ENCODE measurements at regions of chr6 and their contacts with region 1.

Region 1: GRCh38 chr6:24991810-24992467 is 56.2 kb upstream of the RIPOR2 start:
- DNase-seq: peak; percentile 53 to 85 (median 70)
- H3K4me3 ChIP-seq: peak overlapping the region; percentile 30
- H3K4me3 Mint-ChIP-seq: peak overlapping the region in 6 of 7 donors; percentile 33 to 79 (median 57)
- H3K27ac ChIP-seq: peak overlapping the region; percentile 6
- H3K27ac Mint-ChIP-seq: peak overlapping the region; percentile 77 to 95 (median 86)
- H3K4me1 ChIP-seq: peaks cover 43% of the 10 kb centered on the region
- H3K4me1 Mint-ChIP-seq: peaks cover 63 to 86% (median 83%) of the 10 kb centered on the region in 3 donors
- H3K27me3 ChIP-seq: no peaks in the 10 kb centered on the region
- H3K27me3 Mint-ChIP-seq: no peaks in the 10 kb centered on the region

Region 2: DNA sequence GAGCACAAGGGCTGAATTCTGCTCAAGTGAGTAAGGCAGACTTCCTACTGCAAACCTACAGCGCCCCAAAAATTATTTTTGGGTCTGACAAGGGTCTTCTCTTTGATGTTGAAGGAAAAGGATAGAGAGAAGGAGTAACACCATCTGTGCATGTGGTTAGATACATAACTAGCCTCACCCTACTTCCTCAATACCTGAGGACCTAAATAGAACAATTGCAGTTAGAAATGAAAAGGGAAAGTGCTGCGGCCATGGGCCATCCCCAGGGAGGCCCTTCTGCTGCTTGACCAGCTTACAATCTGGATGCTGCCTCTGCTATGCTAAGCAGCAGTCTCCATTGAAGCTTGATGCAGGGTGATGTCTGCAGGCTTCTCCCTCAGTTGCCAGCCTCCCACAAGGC is 130.0 kb before region 1 on chr6:
- CTCF ChIA-PET with region 1: interaction called, 80 read pairs
- POLR2A ChIA-PET with region 1: interaction called, 7 read pairs
- DNase-seq: no peak
- H3K4me3 ChIP-seq: no peak overlapping the region
- H3K4me3 Mint-ChIP-seq: peak overlapping the region in 3 of 7 donors; percentile 4 to 59 (median 13)
- H3K27ac ChIP-seq: no peak overlapping the region
- H3K27ac Mint-ChIP-seq: peak overlapping the region; percentile 75 to 93 (median 82)
- H3K4me1 ChIP-seq: peaks cover 95% of the 10 kb centered on the region
- H3K4me1 Mint-ChIP-seq: peaks cover 87 to 98% (median 90%) of the 10 kb centered on the region in 3 donors
- H3K27me3 ChIP-seq: no peaks in the 10 kb centered on the region
- H3K27me3 Mint-ChIP-seq: peaks cover 0 to 2% of the 10 kb centered on the region in 2 donors

Region 3: GRCh38 chr6:24902782-24903181 is 89.2 kb before region 1 on chr6:
- CTCF ChIA-PET with region 1: interaction called, 87 read pairs
- POLR2A ChIA-PET with region 1: no interaction called
- DNase-seq: no peak
- H3K4me3 ChIP-seq: no peak overlapping the region
- H3K4me3 Mint-ChIP-seq: peak overlapping the region in 6 of 7 donors; percentile 10 to 79 (median 52)
- H3K27ac ChIP-seq: no peak overlapping the region
- H3K27ac Mint-ChIP-seq: peak overlapping the region; percentile 60 to 98 (median 89)
- H3K4me1 ChIP-seq: peaks cover 96% of the 10 kb centered on the region
- H3K4me1 Mint-ChIP-seq: peaks cover 93 to 100% (median 98%) of the 10 kb centered on the region in 3 donors
- H3K27me3 ChIP-seq: no peaks in the 10 kb centered on the region
- H3K27me3 Mint-ChIP-seq: no peaks in the 10 kb centered on the region

Region 4: GRCh38 chr6:24924580-24925356 is 67.2 kb before region 1 on chr6:
- CTCF ChIA-PET with region 1: interaction called, 33 read pairs
- POLR2A ChIA-PET with region 1: interaction called, 6 read pairs
- DNase-seq: no peak
- H3K4me3 ChIP-seq: peak overlapping the region; percentile 32
- H3K4me3 Mint-ChIP-seq: peak overlapping the region; percentile 75 to 86 (median 81)
- H3K27ac ChIP-seq: no peak overlapping the region
- H3K27ac Mint-ChIP-seq: peak overlapping the region; percentile 82 to 95 (median 92)
- H3K4me1 ChIP-seq: peaks cover 88% of the 10 kb centered on the region
- H3K4me1 Mint-ChIP-seq: peaks cover 77 to 97% (median 91%) of the 10 kb centered on the region in 3 donors
- H3K27me3 ChIP-seq: no peaks in the 10 kb centered on the region
- H3K27me3 Mint-ChIP-seq: no peaks in the 10 kb centered on the region

Region 5: DNA sequence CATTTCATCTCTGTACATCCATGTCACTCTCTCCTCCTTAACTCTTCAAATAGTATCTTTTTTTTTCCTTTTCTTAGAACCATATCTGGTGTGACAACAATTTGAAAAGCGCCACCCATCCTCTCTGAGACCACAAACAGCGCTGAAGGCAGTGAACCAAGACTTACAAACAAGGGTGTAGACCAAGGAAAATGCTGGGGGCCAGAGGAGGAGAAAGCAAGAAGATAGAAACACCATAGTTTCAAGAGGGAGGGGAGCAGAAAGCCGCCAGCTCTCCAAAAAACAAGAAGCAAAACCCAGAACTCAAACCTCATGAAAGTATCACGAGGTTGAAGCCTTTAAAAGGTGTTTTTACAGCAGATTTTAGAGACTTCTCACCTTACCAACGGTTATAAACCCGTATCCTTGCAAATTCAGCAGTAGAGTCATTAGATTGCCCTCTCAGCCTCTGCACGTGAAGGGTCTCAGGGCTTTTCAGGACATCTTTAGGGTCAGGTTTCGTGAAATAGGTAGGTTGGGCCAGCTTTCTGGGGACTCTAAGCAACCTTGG is 42.8 kb before region 1 on chr6:
- CTCF ChIA-PET with region 1: interaction called, 72 read pairs
- POLR2A ChIA-PET with region 1: interaction called, 10 read pairs
- DNase-seq: peak in 4 of 5 donors; percentile 21 to 83 (median 80)
- H3K4me3 ChIP-seq: peak overlapping the region; percentile 40
- H3K4me3 Mint-ChIP-seq: peak overlapping the region; percentile 44 to 75 (median 68)
- H3K27ac ChIP-seq: peak overlapping the region; percentile 3
- H3K27ac Mint-ChIP-seq: peak overlapping the region; percentile 78 to 99 (median 91)
- H3K4me1 ChIP-seq: peaks cover 77% of the 10 kb centered on the region
- H3K4me1 Mint-ChIP-seq: peaks cover 77 to 92% (median 92%) of the 10 kb centered on the region in 3 donors
- H3K27me3 ChIP-seq: no peaks in the 10 kb centered on the region
- H3K27me3 Mint-ChIP-seq: no peaks in the 10 kb centered on the region

Region 6: GRCh38 chr6:24974182-24975171 is 17.5 kb before region 1 on chr6:
- CTCF ChIA-PET with region 1: interaction called, 46 read pairs
- POLR2A ChIA-PET with region 1: no interaction called
- DNase-seq: peak in 2 of 5 donors; percentile 45 to 66
- H3K4me3 ChIP-seq: no peak overlapping the region
- H3K4me3 Mint-ChIP-seq: peak overlapping the region in 6 of 7 donors; percentile 58 to 79 (median 66)
- H3K27ac ChIP-seq: peak overlapping the region; percentile 0
- H3K27ac Mint-ChIP-seq: peak overlapping the region; percentile 66 to 98 (median 94)
- H3K4me1 ChIP-seq: peaks cover 48% of the 10 kb centered on the region
- H3K4me1 Mint-ChIP-seq: peaks cover 67 to 83% (median 81%) of the 10 kb centered on the region in 3 donors
- H3K27me3 ChIP-seq: no peaks in the 10 kb centered on the region
- H3K27me3 Mint-ChIP-seq: no peaks in the 10 kb centered on the region

Region 7: GRCh38 chr6:25017932-25018567 is 26.1 kb after region 1 on chr6:
- CTCF ChIA-PET with region 1: interaction called, 25 read pairs
- POLR2A ChIA-PET with region 1: interaction called, 3 read pairs
- DNase-seq: peak; percentile 67 to 86 (median 72)
- H3K4me3 ChIP-seq: no peak overlapping the region
- H3K4me3 Mint-ChIP-seq: peak overlapping the region in 3 of 7 donors; percentile 13 to 41 (median 22)
- H3K27ac ChIP-seq: no peak overlapping the region
- H3K27ac Mint-ChIP-seq: peak overlapping the region in 7 of 8 donors; percentile 43 to 97 (median 75)
- H3K4me1 ChIP-seq: peaks cover 29% of the 10 kb centered on the region
- H3K4me1 Mint-ChIP-seq: peaks cover 40 to 54% (median 48%) of the 10 kb centered on the region in 3 donors
- H3K27me3 ChIP-seq: no peaks in the 10 kb centered on the region
- H3K27me3 Mint-ChIP-seq: no peaks in the 10 kb centered on the region